Heart left ventricle (tissue), 16 donors: ENCODE measurements at regions of chr17 and their contacts with region 1.

Region 1: DNA sequence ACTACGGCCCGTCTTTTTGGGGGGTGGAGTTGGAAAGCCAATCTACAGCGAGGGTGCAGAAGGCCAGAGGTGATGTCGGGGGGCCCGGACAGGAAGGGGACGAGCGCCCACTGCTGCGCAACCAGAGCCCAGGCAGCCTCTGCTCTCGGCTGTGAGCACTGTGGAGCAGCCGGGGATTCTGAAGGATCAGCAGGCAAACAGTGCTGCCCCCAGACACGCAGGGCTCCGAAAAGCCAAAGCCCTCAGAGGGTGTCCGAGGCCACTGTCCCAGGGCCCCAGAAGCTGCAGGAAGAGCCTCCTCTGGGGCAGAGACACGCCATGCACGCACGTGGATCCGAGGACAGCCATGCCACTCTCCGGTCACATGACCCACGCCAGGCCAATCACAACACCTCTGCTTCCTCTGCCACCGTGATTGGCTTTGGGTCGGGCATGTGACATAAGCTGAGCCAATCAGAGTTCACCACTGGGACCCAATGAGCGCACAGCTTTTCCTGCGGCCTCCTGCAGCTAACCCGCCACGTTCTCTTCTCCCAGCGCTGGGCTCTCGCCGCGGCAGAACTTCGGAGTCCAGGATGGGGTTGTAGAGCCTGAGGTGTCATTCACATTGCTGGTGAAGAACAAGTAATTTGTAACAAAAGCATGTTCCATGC is 40.7 kb downstream of the ACTG1 start:
- DNase-seq: peak in 1 of 5 donors; percentile 60
- ATAC-seq: peak; percentile 21 to 53 (median 24)
- H3K4me3 ChIP-seq: peak overlapping the region in 1 of 12 donors; percentile 16
- H3K27ac ChIP-seq: peak overlapping the region in 1 of 12 donors; percentile 44
- H3K4me1 ChIP-seq: peaks cover 0 to 5% (median 0%) of the 10 kb centered on the region in 12 donors
- H3K27me3 ChIP-seq: no peaks in the 10 kb centered on the region
- CTCF ChIP-seq: peak in 2 of 12 donors; percentile 9 to 18
- POLR2A ChIP-seq: no peak

Region 2: DNA sequence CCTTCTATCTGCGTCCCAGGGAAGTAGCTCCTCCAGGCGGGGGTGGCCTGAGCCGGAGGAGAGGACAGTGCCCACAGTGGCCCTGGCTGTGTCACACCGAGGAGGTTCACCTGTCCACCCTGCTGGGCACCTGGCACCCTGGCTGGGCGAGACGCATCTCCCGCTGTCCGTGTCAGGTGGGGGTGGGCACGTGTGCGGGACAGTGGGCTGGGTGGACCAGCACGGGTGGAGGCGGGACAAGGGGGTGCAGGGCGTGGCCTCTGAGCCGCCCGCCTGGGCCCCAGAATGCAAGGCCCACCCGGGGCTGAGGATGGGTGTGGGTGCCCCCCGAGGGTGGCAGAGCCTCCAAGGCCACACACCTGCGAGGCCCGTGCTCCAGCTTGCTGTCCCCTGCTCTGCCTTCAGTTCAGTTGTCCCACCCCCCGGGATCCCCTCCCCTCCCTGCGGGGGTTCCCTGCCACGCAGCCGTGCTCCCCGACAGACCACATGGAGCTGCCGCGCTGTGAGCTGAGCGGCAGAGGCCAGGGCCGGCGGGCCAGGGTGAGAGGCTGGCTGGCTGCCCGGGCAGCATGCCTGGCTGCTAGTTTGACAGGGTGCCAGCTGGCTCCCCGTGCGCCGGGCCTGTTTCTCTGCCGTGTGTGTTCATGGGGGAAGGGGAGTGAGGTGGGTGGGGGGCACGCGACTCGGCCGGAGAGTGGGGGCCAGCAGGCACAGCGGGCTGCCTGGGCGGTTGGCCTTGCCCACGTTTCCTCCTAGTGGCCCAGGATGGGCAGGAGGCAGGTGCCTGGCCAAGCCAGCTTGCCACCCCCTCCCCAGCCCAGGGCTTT is 42.8 kb before region 1 on chr17:
- intact Hi-C with region 1: loop called in 1 of 10 experiments (anchors 5 kb)
- DNase-seq: peak; percentile 75 to 88 (median 84)
- ATAC-seq: peak; percentile 69 to 85 (median 75)
- H3K4me3 ChIP-seq: peak overlapping the region in 8 of 12 donors; percentile 1 to 32 (median 8)
- H3K27ac ChIP-seq: peak overlapping the region in 2 of 12 donors; percentile 13 to 15
- H3K4me1 ChIP-seq: peaks cover 16 to 59% (median 46%) of the 10 kb centered on the region in 12 donors
- H3K27me3 ChIP-seq: peaks cover 0 to 26% (median 0%) of the 10 kb centered on the region in 9 donors
- CTCF ChIP-seq: no peak
- POLR2A ChIP-seq: no peak

Region 3: DNA sequence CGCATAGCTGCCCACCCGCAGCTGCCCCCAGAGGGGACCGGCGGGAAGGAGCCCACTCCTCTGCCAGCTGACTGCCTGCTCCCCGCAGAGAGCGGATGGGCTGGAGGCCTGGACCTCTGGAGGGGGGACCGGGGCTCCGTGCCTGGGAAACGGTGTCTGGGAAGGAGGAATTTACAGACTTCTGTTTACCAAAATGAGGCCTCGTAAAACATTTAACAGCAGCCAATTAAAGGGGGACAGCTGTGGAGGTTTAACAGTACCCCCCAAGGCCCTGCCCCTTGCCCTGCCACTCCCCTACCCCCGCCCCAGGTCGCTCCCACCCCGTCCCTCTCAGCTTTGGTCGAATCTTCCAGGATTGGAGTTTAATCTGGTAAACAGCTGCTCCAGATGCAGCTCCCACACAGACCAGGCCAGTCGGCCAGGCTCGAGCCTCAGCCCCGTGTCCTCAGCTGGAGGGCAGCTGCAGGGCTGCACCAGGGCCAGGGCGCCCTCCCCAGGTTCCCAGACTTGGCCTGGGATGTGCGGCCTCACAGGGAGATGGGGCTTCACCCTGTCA is 35.6 kb before region 1 on chr17:
- intact Hi-C with region 1: loop called in 3 of 10 experiments (anchors 5 kb)
- DNase-seq: peak; percentile 64 to 86 (median 73)
- ATAC-seq: peak in 3 of 4 donors; percentile 57 to 79 (median 74)
- H3K4me3 ChIP-seq: peak overlapping the region in 2 of 12 donors; percentile 4 to 7
- H3K27ac ChIP-seq: peak overlapping the region; percentile 32 to 91 (median 75)
- H3K4me1 ChIP-seq: peaks cover 0 to 49% (median 32%) of the 10 kb centered on the region in 12 donors
- H3K27me3 ChIP-seq: no peaks in the 10 kb centered on the region
- CTCF ChIP-seq: peak in 1 of 12 donors; percentile 19
- POLR2A ChIP-seq: no peak

Region 4: DNA sequence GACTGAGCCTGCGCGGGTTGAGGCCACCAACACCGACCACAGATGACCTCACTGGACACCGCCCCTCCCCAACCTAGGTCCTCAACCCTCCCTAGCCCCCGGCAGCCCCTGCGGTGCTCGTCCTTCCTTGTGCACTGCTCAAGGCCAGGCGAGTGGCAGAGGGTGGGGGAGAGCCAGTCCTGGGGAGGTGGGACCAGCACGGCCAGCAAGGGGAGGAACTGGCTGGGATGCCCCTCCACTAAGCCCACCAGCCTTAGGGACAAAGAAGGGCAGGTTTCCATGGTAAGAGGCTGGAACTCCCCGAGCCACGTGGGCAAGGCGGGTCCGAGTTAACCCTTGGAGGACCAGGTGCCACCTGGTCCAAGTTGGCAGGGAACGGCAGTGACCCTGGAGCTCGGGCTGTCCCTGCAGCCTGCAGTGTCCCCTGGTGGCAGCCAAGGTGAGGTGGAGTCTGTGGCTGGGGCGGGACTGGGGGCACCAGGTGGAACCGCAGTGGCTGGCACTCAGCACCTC is 65.5 kb after region 1 on chr17:
- intact Hi-C with region 1: loop called in 1 of 10 experiments (anchors 10 kb)
- DNase-seq: no peak
- ATAC-seq: peak; percentile 37 to 68 (median 55)
- H3K4me3 ChIP-seq: no peak overlapping the region
- H3K27ac ChIP-seq: no peak overlapping the region
- H3K4me1 ChIP-seq: peaks cover 0 to 21% (median 16%) of the 10 kb centered on the region in 12 donors
- H3K27me3 ChIP-seq: peaks cover 0 to 36% (median 30%) of the 10 kb centered on the region in 9 donors
- CTCF ChIP-seq: peak; percentile 50 to 73 (median 65)
- POLR2A ChIP-seq: no peak

Region 5: DNA sequence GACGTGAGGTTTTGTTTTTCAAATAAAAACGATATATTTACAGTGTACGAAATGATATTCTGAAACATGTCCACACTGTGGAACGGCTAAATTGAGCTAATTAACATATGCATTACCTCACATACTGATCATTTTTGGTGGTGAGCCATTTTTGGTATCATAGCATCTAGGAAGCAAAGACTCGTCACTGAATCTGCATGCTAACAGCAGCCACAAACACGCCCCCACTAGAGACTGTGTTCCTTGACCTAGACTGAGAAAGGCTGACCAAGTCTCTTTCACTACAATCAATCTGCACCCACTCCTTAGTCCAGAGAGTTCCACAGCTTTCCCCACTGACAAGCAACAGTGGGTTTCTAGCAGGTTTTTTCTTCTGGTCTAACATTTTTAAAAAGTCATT is 135.5 kb after region 1 on chr17:
- intact Hi-C with region 1: no loop called
- DNase-seq: no peak
- ATAC-seq: no peak
- H3K4me3 ChIP-seq: no peak overlapping the region
- H3K27ac ChIP-seq: no peak overlapping the region
- H3K4me1 ChIP-seq: peaks cover 0 to 21% (median 3%) of the 10 kb centered on the region in 12 donors
- H3K27me3 ChIP-seq: no peaks in the 10 kb centered on the region
- CTCF ChIP-seq: no peak
- POLR2A ChIP-seq: no peak